HEK293T (cell line): ENCODE measurements at regions of chr3 and their contacts with region 1.

Region 1: DNA sequence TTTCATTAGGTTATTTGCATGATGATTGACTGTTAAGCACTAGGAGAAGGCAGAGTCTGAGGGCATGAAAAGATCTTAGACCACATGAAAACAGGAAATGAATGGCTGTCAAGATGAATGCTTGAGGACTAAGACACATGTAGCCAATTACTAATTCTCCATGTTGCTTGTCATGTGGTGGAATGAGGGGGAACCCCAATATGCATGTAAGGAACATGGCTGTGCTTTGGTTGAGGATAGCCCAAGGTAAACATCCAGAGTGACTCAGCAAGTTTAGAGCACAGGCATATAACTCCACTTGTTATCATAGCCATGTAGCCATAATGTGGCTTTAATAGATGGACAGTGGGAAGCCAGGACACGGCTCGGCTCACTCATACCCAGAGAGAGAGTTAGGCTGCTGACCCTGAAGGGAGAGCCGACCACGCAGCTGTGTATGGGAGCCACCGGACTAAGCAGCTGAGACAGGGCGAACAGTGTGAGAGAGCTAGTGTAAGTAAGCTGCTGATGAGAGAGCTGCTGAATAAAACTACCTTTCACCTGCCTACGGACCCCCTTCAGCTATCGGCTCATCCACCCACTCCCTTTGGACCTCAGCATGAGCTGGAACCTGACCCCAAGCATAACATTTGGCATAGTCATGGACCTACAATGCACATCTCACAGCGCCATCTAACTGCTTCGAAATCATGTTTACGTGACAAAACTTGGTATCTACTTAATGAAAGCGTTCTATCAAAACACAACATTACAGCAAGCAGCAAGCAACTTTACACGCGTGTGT is 37.6 kb downstream of the ANO10 start:
- DNase-seq: no peak

Region 2: GRCh38 chr3:43531835-43532234 is 52.4 kb before region 1 on chr3:
- CTCF ChIA-PET with region 1: no interaction called
- POLR2A ChIA-PET with region 1: no interaction called
- DNase-seq: no peak

Region 3: GRCh38 chr3:43559963-43560362 is 24.3 kb before region 1 on chr3:
- CTCF ChIA-PET with region 1: no interaction called
- POLR2A ChIA-PET with region 1: no interaction called
- DNase-seq: no peak

Region 4: GRCh38 chr3:43879166-43879565 is 294.9 kb after region 1 on chr3:
- CTCF ChIA-PET with region 1: interaction called, 10 read pairs
- POLR2A ChIA-PET with region 1: no interaction called
- DNase-seq: peak; percentile 42